Cardiac septum (tissue), 1 donor: ENCODE measurements at regions of chr2 and their contacts with region 1.

Region 1: DNA sequence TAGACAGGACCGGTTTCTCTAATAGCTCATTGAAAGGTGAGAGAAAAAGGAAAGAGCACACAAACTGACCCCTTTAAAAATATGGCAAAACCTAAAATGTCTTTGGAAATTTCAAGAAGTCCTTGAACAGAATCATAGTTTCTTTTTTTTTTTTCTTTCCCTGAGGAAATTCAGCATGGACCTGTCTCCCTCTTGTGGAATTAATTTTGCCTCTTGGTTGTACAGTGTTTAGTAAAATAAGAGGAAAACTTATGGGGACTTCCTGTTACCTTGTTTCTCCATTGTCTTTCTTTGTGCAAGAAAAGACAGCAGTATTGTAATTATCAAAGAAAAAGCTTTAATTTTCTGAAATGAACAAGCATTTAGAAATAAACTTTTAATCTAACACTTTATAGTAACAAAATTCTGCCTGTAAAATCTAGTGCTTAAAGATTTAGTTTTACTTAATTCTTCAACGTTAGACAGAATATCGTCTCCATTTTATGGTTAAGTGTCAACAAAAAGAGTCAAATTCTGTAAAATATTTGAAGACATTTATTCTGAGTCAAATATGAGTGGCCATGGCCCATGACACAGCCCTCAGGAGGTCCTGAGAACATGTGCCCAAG is 176.3 kb upstream of the NABP1 start:
- DNase-seq: no peak

Region 2: DNA sequence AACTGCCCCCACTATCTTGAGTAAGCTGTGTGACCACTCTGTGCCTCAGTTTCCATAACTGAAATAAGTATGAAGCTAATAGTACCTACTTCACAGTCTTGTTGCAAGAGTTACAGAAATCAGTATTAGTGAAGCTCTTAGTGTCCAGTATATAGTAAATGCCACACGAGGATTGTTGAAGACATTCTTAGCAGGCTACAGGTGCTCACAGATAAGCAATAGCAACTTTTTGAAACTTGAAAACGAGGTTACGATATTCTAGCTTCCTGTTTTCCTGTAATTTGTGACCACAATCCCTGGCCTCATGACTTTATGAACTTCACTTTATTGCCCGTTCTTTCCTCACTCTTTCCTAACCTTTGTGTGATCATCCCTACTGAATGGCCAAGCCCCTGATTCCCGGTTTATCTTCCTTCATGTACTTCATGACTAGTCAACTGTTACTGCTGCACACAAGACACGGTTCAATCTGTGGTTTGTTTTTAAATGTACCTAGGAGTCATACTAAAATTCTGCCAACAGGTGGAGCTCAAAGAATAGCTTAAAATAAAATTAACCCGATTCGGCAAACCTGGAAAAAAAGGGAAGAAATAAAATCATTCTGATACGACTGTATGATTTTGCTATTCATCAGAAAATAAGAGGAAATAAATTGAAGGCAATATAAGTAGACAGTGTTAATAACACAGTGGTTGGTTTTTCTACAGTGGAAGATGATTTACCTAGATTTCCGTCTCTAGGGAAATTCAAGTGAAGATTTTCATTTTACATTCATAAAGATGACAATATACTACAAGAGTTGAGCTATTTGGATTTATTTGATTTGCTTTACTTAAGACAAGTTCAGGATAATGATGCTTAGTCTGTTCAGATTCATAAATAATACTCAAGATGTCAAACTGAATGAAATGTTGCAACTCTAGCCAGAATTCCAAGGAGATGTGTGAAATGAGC is 449.6 kb before region 1 on chr2:
- intact Hi-C with region 1: loop called (anchors 5 kb)
- DNase-seq: no peak

Region 3: GRCh38 chr2:191218292-191218898 is 283.3 kb before region 1 on chr2:
- intact Hi-C with region 1: loop called (anchors 1 kb)
- DNase-seq: no peak

Region 4: DNA sequence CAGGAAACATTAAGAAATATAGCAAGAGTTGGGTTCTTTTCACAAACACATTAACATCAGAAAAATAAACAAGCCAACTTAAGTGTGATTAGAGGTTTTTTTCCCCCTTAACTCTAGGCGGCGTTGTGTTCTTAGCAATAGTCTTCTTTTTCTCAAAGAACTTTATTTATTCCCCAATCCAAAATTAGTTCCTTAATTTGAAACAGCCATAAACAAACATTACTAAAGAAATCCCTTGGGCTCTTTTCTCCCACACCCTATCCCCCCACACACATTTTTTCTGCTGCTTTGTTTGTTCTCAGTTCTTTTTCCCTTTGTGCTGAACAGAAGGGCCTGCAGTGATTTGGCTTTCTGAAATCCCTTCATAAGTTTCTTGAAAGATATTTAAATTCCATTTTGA is 269.7 kb before region 1 on chr2:
- intact Hi-C with region 1: loop called (anchors 5 kb)
- DNase-seq: no peak

Region 5: DNA sequence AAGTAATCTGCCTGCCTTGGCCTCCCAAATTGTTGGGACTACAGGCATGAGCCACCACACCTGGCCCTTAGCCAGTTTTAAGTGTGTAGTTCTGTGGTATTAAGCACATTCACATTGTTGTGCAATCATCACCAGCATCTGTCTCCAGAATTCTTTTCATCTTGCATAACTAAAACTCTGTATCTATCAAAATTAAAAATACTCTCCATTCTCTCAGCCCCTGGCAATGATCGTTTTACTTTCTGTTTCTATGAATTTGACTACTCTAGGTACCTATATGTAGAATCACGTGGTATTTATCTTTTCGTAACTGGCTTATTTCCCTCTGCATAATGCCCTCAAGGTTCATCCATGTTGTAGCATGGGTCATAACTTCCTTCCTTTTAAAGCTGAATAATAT is 390.7 kb after region 1 on chr2:
- intact Hi-C with region 1: no loop called
- DNase-seq: no peak